Heart right ventricle (tissue), 16 donors: ENCODE measurements at regions of chr18 and their contacts with region 1.

Region 1: DNA sequence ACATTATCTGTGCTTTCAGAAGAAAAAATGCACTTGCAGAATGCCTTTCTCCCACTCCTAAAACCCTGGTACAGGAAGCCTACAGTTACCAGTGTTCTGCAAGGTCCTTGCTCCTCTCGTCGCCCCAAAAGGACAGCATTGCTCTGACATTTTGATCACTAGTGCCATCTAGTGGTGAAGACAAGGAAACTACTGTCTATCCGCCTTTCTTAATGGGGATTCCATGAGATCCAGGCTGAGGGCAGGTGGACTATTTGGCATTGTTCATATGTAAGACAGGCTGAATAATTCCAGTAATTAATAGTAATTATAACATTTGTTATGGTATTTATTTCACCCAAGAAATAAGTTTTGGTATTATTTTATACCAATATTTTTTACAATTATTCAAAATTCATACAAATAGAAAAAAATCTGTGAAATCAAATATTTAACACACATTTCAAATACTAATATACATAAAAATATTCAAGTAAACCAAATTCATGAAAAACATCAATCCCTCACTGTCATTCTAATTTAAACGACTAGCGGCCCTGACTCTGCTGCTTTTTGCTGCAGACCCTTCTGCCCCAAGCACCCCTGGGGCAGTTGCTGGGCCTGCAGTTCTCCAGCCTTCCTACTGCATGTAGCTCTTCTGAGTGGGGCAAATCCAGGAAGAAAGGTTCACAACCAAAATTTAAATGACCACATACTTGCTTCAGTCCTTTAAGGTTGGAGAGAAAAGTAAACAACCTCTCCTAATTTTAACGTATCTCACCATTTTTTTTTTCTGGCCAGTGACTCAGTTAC is 19.0 kb downstream of the TPGS2 start:
- DNase-seq: peak in 1 of 2 donors; percentile 31
- ATAC-seq: peak; percentile 56 to 89 (median 82)
- H3K4me3 ChIP-seq: no peak overlapping the region
- H3K27ac ChIP-seq: no peak overlapping the region
- H3K4me1 ChIP-seq: peaks cover 0 to 15% (median 5%) of the 10 kb centered on the region in 9 donors
- H3K27me3 ChIP-seq: no peaks in the 10 kb centered on the region
- CTCF ChIP-seq: peak; percentile 61 to 88 (median 83)

Region 2: GRCh38 chr18:36688020-36688965 is 121.5 kb before region 1 on chr18:
- intact Hi-C with region 1: loop called in 4 of 10 experiments (anchors 2 to 5 kb)
- DNase-seq: peak in 1 of 2 donors; percentile 27
- ATAC-seq: peak in 4 of 8 donors; percentile 59 to 77 (median 61)
- H3K4me3 ChIP-seq: no peak overlapping the region
- H3K27ac ChIP-seq: no peak overlapping the region
- H3K4me1 ChIP-seq: peaks cover 0 to 17% (median 0%) of the 10 kb centered on the region in 9 donors
- H3K27me3 ChIP-seq: no peaks in the 10 kb centered on the region
- CTCF ChIP-seq: peak; percentile 49 to 89 (median 82)

Region 3: DNA sequence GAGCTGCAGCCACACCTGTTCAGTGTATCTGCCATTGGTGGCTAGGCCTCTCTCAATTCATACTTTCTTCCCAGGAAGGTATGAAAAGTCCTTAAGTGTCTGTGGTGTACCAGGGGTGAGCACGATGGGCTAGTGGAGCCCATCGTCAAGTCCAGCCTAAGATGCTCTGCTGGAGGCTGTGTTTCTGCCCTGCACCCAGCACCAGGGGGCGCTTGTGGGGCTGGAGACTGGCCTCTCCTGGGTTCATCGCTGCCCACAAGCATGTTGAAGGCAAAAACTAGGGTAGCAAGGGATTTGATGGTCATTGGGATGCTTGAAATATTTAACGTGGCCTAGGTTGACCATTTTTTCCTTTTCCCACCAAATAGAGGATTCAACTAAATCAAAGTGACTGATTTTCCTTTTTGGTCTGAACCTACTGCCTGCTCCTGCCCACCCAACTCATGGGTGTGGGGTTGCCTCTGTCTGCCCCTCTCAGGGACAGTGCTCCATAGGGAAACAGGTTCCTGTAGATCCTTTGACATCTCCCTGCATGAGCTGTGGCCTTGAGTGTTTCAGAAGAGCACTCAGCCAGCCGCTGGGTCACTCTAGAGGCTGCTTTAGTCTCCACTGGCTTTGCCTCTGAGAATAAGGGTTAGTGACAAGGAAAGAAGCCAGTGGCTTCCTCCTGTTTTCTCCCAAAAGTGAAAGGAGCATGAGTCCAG is 40.0 kb before region 1 on chr18:
- intact Hi-C with region 1: loop called in 1 of 10 experiments (anchors 5 kb)
- DNase-seq: peak in 1 of 2 donors; percentile 35
- ATAC-seq: peak in 3 of 8 donors; percentile 29 to 48 (median 46)
- H3K4me3 ChIP-seq: no peak overlapping the region
- H3K27ac ChIP-seq: no peak overlapping the region
- H3K4me1 ChIP-seq: peaks cover 0 to 19% (median 3%) of the 10 kb centered on the region in 9 donors
- H3K27me3 ChIP-seq: no peaks in the 10 kb centered on the region
- CTCF ChIP-seq: peak in 8 of 9 donors; percentile 13 to 53 (median 43)